Breast epithelium (tissue), 4 donors: ENCODE measurements at regions of chr1 and their contacts with region 1.

Region 1: GRCh38 chr1:201905234-201905890 is 16.7 kb downstream of the SHISA4 start:
- DNase-seq: no peak
- H3K4me3 ChIP-seq: peak overlapping the region in 2 of 3 donors; percentile 10 to 15
- H3K27ac ChIP-seq: peak overlapping the region; percentile 89 to 97
- H3K4me1 ChIP-seq: peaks cover 0 to 22% of the 10 kb centered on the region in 2 donors
- H3K27me3 ChIP-seq: no peaks in the 10 kb centered on the region
- CTCF ChIP-seq: no peak
- POLR2A ChIP-seq: no peak

Region 2: GRCh38 chr1:201766131-201766866 is 139.1 kb before region 1 on chr1:
- intact Hi-C with region 1: no loop called
- DNase-seq: peak in 1 of 2 donors; percentile 35
- H3K4me3 ChIP-seq: no peak overlapping the region
- H3K27ac ChIP-seq: peak overlapping the region in 1 of 2 donors; percentile 23
- H3K4me1 ChIP-seq: peaks cover 0 to 4% of the 10 kb centered on the region in 2 donors
- H3K27me3 ChIP-seq: no peaks in the 10 kb centered on the region
- CTCF ChIP-seq: no peak
- POLR2A ChIP-seq: no peak

Region 3: DNA sequence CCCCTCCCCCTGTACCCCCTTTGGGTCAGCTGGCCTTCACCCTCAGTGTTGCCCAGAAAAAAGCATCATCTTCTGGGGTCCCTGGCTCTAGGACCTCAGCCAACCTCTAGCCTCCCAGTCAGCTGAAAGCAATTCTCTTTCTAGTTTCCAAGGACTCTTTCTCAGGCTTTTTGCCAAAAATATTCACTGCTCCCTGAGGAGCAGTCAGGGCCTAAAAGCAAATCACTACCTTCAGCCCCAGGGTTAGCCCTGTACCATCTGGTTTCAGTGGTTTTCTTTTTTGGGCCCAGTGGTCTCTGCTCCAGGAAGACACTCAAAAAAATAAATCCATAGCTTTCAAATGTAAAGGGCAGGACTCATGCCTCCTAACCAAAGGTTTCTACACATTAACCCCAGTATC is 44.1 kb after region 1 on chr1:
- intact Hi-C with region 1: loop called (anchors 1 kb)
- DNase-seq: no peak
- H3K4me3 ChIP-seq: no peak overlapping the region
- H3K27ac ChIP-seq: no peak overlapping the region
- H3K4me1 ChIP-seq: no peaks in the 10 kb centered on the region
- H3K27me3 ChIP-seq: no peaks in the 10 kb centered on the region
- CTCF ChIP-seq: no peak
- POLR2A ChIP-seq: no peak